Motor neuron (in vitro differentiated cells): ENCODE measurements at regions of chr17 and their contacts with region 1.

Region 1: GRCh38 chr17:57849874-57850754 is at the start of gene MRPS23:
- ATAC-seq: peak; percentile 90 to 95 (median 93)
- H3K4me3 ChIP-seq: peak within 1 kb of the TSS; percentile 68 to 79 (median 73)
- H3K27ac ChIP-seq: peak within 1 kb of the TSS; percentile 61 to 84
- H3K4me1 ChIP-seq: peaks cover 10% of the 10 kb centered on the region in 2 donors
- total RNA-seq, gene MRPS23: 33.4 to 72.9 (median 47.4) TPM

Region 2: DNA sequence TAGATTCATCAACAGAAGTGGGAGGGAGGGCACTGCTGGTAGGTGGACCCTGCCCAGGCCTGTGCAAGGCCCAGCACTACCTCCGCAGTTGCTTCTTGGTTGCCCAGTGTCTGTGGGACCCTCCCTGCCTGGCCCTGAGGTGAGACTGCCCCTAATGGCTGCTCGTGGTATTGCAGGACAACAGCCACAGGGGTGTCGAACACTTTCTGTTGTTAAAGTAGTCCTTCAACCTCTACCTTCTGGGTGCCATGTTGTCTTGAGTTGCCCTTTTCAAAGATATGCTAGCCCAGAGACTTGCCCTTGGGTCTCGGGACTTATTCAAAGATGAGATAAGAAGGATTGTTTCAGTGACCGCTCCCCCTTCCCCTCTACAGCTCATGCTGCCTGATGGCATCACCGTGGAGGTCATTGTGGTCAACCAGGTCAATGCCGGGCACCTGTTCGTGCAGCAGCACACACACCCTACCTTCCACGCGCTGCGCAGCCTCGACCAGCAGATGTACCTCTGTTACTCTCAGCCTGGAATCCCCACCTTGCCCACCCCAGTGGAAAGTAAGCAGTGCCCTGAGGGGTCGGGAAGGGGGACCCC is 735.9 kb before region 1 on chr17:
- in situ Hi-C with region 1: loop called in 1 of 9 experiments (anchors 25 kb)
- ATAC-seq: peak in 5 of 8 experiments; percentile 21 to 75 (median 50)
- H3K4me3 ChIP-seq: no peak overlapping the region
- H3K27ac ChIP-seq: no peak overlapping the region
- H3K4me1 ChIP-seq: no peaks in the 10 kb centered on the region

Region 3: GRCh38 chr17:57130761-57131461 is 719.2 kb before region 1 on chr17:
- in situ Hi-C with region 1: loop called in 2 of 9 experiments (anchors 25 kb)
- ATAC-seq: peak; percentile 79 to 98 (median 86)
- H3K4me3 ChIP-seq: no peak overlapping the region
- H3K27ac ChIP-seq: no peak overlapping the region
- H3K4me1 ChIP-seq: peaks cover 18 to 23% of the 10 kb centered on the region in 2 donors

Region 4: GRCh38 chr17:57995076-57995956 is 145.2 kb after region 1 on chr17:
- in situ Hi-C with region 1: loop called in 7 of 9 experiments (anchors 5 to 25 kb)
- ATAC-seq: peak; percentile 63 to 84 (median 79)
- H3K4me3 ChIP-seq: no peak overlapping the region
- H3K27ac ChIP-seq: no peak overlapping the region
- H3K4me1 ChIP-seq: peaks cover 8 to 27% of the 10 kb centered on the region in 2 donors

Region 5: DNA sequence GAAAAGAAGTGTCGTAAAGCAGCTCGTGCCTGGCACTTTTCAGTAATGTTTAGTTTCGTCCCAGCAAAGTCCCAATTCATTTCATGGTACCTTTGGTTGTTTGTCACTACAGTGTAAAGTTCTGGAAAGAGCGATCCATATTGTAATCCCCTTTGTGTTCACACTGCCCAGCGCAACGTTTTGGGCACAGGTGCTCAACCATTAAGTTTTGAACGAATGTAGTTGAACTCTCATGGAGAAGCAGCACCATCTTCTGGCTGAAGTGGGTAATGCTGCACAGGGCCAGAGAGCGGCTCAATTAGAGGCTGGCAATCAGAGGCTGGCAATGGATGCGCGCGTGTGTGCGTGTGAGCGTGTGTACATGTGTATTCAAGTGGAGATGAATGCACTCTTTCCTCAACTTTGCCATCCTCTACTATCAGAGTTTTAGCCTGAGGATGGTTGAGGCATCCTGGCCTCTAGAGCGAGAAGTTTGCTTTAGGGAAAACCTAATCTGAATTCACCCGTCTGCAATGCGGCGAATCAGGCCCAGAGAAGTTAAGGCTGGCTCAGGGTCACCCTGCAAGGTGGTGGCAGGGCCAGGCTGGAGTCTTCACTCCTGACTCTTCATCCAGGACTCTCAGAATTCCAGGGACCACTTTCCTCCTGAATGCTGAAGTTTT is 263.0 kb after region 1 on chr17:
- in situ Hi-C with region 1: loop called in 8 of 9 experiments (anchors 10 to 25 kb)
- ATAC-seq: peak; percentile 74 to 90 (median 78)
- H3K4me3 ChIP-seq: no peak overlapping the region
- H3K27ac ChIP-seq: no peak overlapping the region
- H3K4me1 ChIP-seq: no peaks in the 10 kb centered on the region